Activated CD4-positive, alpha-beta memory T cell treated with anti-CD3 and anti-CD28 coated beads for 36 hours (primary cell): ENCODE measurements at regions of chr2 and their contacts with region 1.

Region 1: DNA sequence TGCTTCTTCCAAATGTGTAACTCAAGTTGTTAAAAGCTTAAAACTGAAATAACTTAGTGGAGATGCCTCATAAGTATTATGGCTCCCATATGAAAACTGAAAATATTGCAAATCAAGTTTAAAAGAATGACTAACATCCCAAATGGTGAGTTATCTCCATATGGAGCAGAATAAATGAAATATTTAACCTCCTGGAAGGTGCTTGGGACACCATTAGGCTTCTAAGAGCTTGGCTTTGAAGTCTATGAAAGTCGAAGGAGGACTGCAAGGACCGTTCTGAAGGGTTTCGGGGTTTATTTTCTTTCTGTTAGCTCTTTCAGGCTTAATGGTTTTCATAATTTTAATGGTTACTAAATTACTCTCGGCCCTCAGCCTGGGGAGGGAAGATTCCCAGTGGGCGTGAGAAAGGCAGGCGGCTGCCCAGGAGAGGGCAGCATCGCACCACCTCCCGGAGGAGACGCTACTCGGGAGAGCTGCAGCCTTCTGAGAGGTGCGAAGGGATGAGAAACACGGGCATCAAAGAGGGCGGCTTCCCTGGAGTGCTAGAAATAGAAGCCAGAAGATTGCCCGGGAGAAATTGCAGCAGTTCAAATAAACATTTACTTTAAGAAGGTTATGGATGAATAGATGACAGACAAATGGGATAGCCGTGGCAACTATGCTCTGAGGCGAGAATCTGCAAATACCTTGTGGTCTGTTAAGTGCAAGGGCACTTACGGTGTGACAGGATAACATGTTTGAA is 43.1 kb downstream of the MAP3K19 start:
- DNase-seq: peak; percentile 82
- H3K4me3 Mint-ChIP-seq: no peak overlapping the region
- H3K27ac Mint-ChIP-seq: no peak overlapping the region
- H3K4me1 Mint-ChIP-seq: peaks cover 4% of the 10 kb centered on the region
- H3K27me3 Mint-ChIP-seq: peaks cover 25% of the 10 kb centered on the region

Region 2: GRCh38 chr2:135030826-135031225 is 26.6 kb after region 1 on chr2:
- CTCF ChIA-PET with region 1: interaction called, 10 read pairs
- POLR2A ChIA-PET with region 1: no interaction called
- intact Hi-C with region 1: no loop called
- DNase-seq: no peak
- H3K4me3 Mint-ChIP-seq: no peak overlapping the region
- H3K27ac Mint-ChIP-seq: no peak overlapping the region
- H3K4me1 Mint-ChIP-seq: no peaks in the 10 kb centered on the region
- H3K27me3 Mint-ChIP-seq: peaks cover 2% of the 10 kb centered on the region

Region 3: GRCh38 chr2:135245055-135245454 is 240.9 kb after region 1 on chr2:
- CTCF ChIA-PET with region 1: no interaction called
- POLR2A ChIA-PET with region 1: no interaction called
- intact Hi-C with region 1: loop called (anchors 10 kb)
- DNase-seq: peak; percentile 20
- H3K4me3 Mint-ChIP-seq: no peak overlapping the region
- H3K27ac Mint-ChIP-seq: no peak overlapping the region
- H3K4me1 Mint-ChIP-seq: peaks cover 4% of the 10 kb centered on the region
- H3K27me3 Mint-ChIP-seq: no peaks in the 10 kb centered on the region

Region 4: DNA sequence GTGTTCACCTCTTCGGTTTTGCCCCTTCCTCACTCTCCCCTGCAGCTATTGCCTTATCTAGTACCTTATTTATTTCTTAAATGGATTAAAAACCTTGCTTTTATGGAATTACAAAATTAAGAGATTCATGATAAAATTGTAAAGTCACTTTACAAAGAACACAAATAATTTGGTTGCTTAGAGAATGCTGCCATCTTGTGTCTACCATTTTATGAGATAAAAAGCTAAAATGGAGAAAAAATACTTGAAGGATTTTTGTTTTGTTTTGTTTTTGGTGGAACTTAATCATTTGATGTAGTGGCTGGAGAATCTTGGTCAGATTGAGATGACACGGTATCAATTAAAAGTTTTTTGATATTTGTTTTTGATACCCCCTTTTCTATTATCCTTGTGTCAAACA is 596.7 kb after region 1 on chr2:
- CTCF ChIA-PET with region 1: interaction called, 6 read pairs
- POLR2A ChIA-PET with region 1: no interaction called
- intact Hi-C with region 1: loop called (anchors 1 kb)
- DNase-seq: no peak
- H3K4me3 Mint-ChIP-seq: no peak overlapping the region
- H3K27ac Mint-ChIP-seq: no peak overlapping the region
- H3K4me1 Mint-ChIP-seq: no peaks in the 10 kb centered on the region
- H3K27me3 Mint-ChIP-seq: no peaks in the 10 kb centered on the region

Region 5: GRCh38 chr2:136468799-136469369 is 1464.7 kb after region 1 on chr2:
- CTCF ChIA-PET with region 1: no interaction called
- POLR2A ChIA-PET with region 1: no interaction called
- intact Hi-C with region 1: no loop called
- DNase-seq: no peak
- H3K4me3 Mint-ChIP-seq: no peak overlapping the region
- H3K27ac Mint-ChIP-seq: no peak overlapping the region
- H3K4me1 Mint-ChIP-seq: no peaks in the 10 kb centered on the region
- H3K27me3 Mint-ChIP-seq: peaks cover 13% of the 10 kb centered on the region